H1 (cell line): ENCODE measurements at regions of chr1 and their contacts with region 1.

Region 1: DNA sequence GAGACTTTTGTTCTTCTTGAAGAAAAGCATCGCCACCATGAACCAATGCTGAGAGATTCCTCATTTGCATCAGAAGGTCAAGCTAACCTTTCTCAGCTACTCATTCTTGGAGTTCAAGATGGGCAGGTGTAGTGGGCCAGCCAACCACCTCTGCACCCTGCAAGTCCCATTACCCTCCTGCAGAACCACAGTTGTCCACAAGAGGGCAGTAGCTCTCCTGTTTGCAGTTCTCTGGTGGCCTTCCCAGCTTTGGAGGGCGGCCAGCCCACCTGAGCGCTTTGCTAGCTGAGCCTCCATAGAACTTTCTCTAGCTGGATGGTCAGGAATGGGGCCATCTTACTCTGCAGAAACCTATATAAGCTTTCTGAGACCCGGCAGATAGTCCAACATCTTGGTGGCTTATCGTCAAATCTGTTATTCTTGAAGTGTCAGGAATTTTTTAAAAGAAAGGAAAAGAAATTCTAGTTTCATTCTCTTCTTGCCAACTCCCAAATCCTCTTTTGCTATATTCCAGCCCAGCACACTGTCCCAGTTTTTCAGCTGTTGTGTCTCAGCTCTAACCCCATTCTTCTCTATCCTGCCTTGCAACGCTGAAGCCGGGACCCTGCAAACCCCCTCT is 11.0 kb upstream of the LMX1A start:
- DNase-seq: peak in 1 of 2 experiments; percentile 98
- H3K4me3 ChIP-seq: no peak overlapping the region
- H3K27ac ChIP-seq: no peak overlapping the region
- H3K4me1 ChIP-seq: peaks cover 0 to 4% (median 0%) of the 10 kb centered on the region in 4 experiments; a peak in 3 of 7 replicates
- H3K27me3 ChIP-seq: peaks cover 0 to 5% (median 0%) of the 10 kb centered on the region in 4 experiments; a peak in 1 of 7 replicates
- CTCF ChIP-seq: peak; percentile 90 to 99 (median 91)
- EP300 ChIP-seq: no peak
- POLR2A ChIP-seq: no peak
- RAD21 ChIP-seq: peak; percentile 64 to 76

Region 2: DNA sequence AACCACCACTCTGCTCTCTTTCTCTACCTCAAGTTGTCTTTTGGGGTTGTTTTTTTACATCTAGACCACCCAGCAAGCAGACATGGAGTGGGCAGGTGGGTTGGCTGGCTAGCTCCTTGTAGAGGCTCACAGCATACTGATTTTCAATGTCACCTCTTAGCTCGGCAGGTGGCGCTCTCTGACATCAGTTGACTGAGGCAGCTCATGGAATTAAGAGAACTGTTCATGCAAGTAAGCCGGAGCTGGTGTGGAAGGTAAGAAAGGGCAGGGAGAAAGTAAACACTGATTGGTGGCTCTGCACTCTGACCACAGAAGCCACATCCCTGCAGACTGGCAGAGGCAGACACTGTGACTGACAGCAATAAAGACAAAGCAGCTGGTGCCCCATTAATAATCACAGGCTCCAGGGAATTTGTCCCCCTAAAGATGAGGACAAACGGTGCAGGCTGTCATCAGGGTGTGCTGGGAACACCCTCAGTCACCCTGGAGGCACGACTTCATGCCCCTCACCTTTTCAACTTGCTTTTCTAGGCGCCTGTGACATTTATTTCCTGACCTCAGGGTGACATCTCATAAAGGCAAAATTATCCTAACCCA is 237.8 kb before region 1 on chr1:
- CTCF ChIA-PET with region 1: interaction called, 15 read pairs
- POLR2A ChIA-PET with region 1: no interaction called
- DNase-seq: peak; percentile 53 to 87
- H3K4me3 ChIP-seq: no peak overlapping the region
- H3K27ac ChIP-seq: no peak overlapping the region
- H3K4me1 ChIP-seq: no peaks in the 10 kb centered on the region
- H3K27me3 ChIP-seq: no peaks in the 10 kb centered on the region
- CTCF ChIP-seq: peak; percentile 68 to 92 (median 83)
- EP300 ChIP-seq: no peak
- POLR2A ChIP-seq: no peak
- RAD21 ChIP-seq: peak; percentile 84 to 86

Region 3: GRCh38 chr1:165152727-165153126 is 214.8 kb before region 1 on chr1:
- CTCF ChIA-PET with region 1: interaction called, 70 read pairs
- POLR2A ChIA-PET with region 1: no interaction called
- DNase-seq: no peak
- H3K4me3 ChIP-seq: no peak overlapping the region
- H3K27ac ChIP-seq: no peak overlapping the region
- H3K4me1 ChIP-seq: peaks cover 0 to 9% (median 1%) of the 10 kb centered on the region in 4 experiments; a peak in 1 of 7 replicates
- H3K27me3 ChIP-seq: no peaks in the 10 kb centered on the region; a peak in 1 of 7 replicates
- CTCF ChIP-seq: peak; percentile 62 to 74 (median 62)
- EP300 ChIP-seq: no peak
- POLR2A ChIP-seq: no peak
- RAD21 ChIP-seq: peak; percentile 69 to 77

Region 4: DNA sequence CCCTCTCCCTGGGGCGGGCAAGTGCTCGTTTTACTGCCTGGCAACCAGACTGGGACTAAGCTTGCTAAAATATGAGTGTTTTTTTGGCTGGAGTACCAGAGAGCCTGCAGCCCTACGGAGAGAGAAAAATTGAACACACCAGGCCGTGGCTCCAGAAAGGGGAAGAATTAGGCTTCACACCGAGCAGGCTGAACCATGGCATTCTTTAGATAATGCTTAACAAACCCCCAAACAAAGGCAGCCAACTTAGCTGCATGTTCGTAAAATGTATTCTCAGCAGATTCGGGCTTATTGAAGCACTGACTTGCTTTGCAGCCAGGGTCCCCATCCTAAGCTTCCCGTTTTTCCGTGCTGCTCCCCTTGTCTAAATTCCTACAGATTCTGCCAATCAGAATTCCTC is 87.6 kb before region 1 on chr1:
- CTCF ChIA-PET with region 1: interaction called, 12 read pairs
- POLR2A ChIA-PET with region 1: no interaction called
- DNase-seq: no peak
- H3K4me3 ChIP-seq: no peak overlapping the region; a peak in 1 of 8 replicates
- H3K27ac ChIP-seq: no peak overlapping the region
- H3K4me1 ChIP-seq: peaks cover 0 to 12% (median 4%) of the 10 kb centered on the region in 4 experiments; a peak in 3 of 7 replicates
- H3K27me3 ChIP-seq: 0 out of 7 replicates have a peak, but pooled peaks cover 0 to 2% (median 0%) of the 10 kb centered on the region in 4 experiments
- CTCF ChIP-seq: no peak
- EP300 ChIP-seq: no peak
- POLR2A ChIP-seq: no peak
- RAD21 ChIP-seq: no peak

Region 5: GRCh38 chr1:165327538-165327937 is 39.9 kb before region 1 on chr1:
- CTCF ChIA-PET with region 1: interaction called, 31 read pairs
- POLR2A ChIA-PET with region 1: no interaction called
- DNase-seq: no peak
- H3K4me3 ChIP-seq: no peak overlapping the region
- H3K27ac ChIP-seq: no peak overlapping the region
- H3K4me1 ChIP-seq: peaks cover 0 to 3% (median 0%) of the 10 kb centered on the region in 4 experiments; a peak in 1 of 7 replicates
- H3K27me3 ChIP-seq: no peaks in the 10 kb centered on the region; a peak in 1 of 7 replicates
- CTCF ChIP-seq: no peak
- EP300 ChIP-seq: no peak
- POLR2A ChIP-seq: no peak
- RAD21 ChIP-seq: no peak

Region 6: DNA sequence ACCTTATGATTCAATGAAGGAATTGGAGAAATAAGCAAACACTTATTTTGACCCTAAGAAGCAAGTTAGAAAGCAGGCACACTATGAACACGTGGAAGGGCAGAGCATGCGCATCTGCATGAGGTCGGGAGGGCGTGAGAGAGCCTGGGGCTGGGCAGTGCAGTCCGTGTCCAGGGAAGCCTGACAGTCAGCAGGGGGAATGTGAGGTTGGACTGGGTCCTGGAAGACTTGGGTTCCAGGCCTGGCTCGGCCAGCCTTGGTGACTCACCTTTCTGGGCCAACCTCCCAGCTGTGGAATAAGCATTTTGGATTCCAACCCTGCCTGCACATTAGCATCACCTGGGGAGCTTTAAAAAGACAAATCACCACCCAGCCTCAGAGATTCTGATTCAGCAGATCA is 15.6 kb after region 1 on chr1:
- CTCF ChIA-PET with region 1: interaction called, 40 read pairs
- POLR2A ChIA-PET with region 1: no interaction called
- DNase-seq: no peak
- H3K4me3 ChIP-seq: no peak overlapping the region
- H3K27ac ChIP-seq: no peak overlapping the region
- H3K4me1 ChIP-seq: peaks cover 0 to 2% (median under 1%) of the 10 kb centered on the region in 4 experiments; a peak in 2 of 7 replicates
- H3K27me3 ChIP-seq: no peaks in the 10 kb centered on the region
- CTCF ChIP-seq: no peak
- EP300 ChIP-seq: no peak
- POLR2A ChIP-seq: no peak
- RAD21 ChIP-seq: no peak

Region 7: DNA sequence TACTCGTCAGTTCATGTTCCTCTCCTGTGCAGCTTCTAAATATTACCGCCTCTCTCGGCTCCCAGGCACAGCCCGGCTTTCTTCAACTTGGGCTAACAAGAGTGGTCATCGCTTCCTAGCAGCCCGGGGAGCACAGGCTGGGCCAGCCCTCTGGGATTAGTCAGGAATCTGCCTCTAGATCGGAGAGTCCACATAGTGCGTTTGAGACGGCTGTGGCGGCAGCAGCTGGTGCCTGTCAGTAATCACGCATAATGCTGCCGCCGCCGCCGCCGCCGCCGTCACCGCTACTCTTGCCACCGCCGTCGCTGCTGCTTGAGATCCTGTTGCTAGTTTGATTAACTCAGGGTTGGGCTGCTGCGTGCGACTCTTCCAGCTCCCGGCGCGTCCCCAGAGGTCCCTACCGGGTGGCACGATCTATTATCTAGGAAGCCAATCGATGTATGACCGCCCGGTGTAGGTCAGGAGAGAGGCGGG is 77.5 kb after region 1 on chr1 and contains the start of gene RXRG:
- CTCF ChIA-PET with region 1: no interaction called
- POLR2A ChIA-PET with region 1: no interaction called
- DNase-seq: peak in 1 of 2 experiments; percentile 57
- H3K4me3 ChIP-seq: peak within 1 kb of the TSS; percentile 1 to 52 (median 28); a peak in 7 of 8 replicates
- H3K27ac ChIP-seq: no peak within 1 kb of the TSS
- H3K4me1 ChIP-seq: peaks cover 10 to 19% (median 14%) of the 10 kb centered on the region in 4 experiments; a peak in 6 of 7 replicates
- H3K27me3 ChIP-seq: peaks cover 35 to 74% (median 61%) of the 10 kb centered on the region in 4 experiments
- CTCF ChIP-seq: no peak
- EP300 ChIP-seq: no peak
- POLR2A ChIP-seq: no peak
- RAD21 ChIP-seq: no peak
- total RNA-seq, gene RXRG: not detected in 2 replicates

Region 8: GRCh38 chr1:165537356-165538109 is 170.0 kb after region 1 on chr1:
- CTCF ChIA-PET with region 1: no interaction called
- POLR2A ChIA-PET with region 1: no interaction called
- DNase-seq: no peak
- H3K4me3 ChIP-seq: no peak overlapping the region
- H3K27ac ChIP-seq: no peak overlapping the region
- H3K4me1 ChIP-seq: peaks cover 0 to 4% (median 0%) of the 10 kb centered on the region in 4 experiments; a peak in 1 of 7 replicates
- H3K27me3 ChIP-seq: no peaks in the 10 kb centered on the region; a peak in 1 of 7 replicates
- CTCF ChIP-seq: no peak
- EP300 ChIP-seq: no peak
- POLR2A ChIP-seq: no peak
- RAD21 ChIP-seq: no peak

Region 9: GRCh38 chr1:165726169-165726568 is 358.7 kb after region 1 on chr1:
- CTCF ChIA-PET with region 1: no interaction called
- POLR2A ChIA-PET with region 1: no interaction called
- DNase-seq: no peak
- H3K4me3 ChIP-seq: no peak overlapping the region
- H3K27ac ChIP-seq: no peak overlapping the region
- H3K4me1 ChIP-seq: no peaks in the 10 kb centered on the region
- H3K27me3 ChIP-seq: no peaks in the 10 kb centered on the region
- CTCF ChIP-seq: no peak
- EP300 ChIP-seq: no peak
- POLR2A ChIP-seq: no peak
- RAD21 ChIP-seq: no peak